CD4-positive, alpha-beta memory T cell (primary cell): ENCODE measurements at regions of chr7 and their contacts with region 1.

Region 1: GRCh38 chr7:74449809-74450397 is 3.8 kb upstream of the GTF2IRD1 start:
- DNase-seq: peak; percentile 59 to 67 (median 63)
- H3K4me3 ChIP-seq: no peak overlapping the region
- H3K4me3 Mint-ChIP-seq: peak overlapping the region in 1 of 8 donors; percentile 71
- H3K27ac ChIP-seq: no peak overlapping the region
- H3K27ac Mint-ChIP-seq: peak overlapping the region; percentile 26 to 89 (median 74)
- H3K4me1 ChIP-seq: peaks cover 22% of the 10 kb centered on the region
- H3K4me1 Mint-ChIP-seq: peaks cover 14 to 25% (median 19%) of the 10 kb centered on the region in 4 donors
- H3K27me3 ChIP-seq: no peaks in the 10 kb centered on the region
- H3K27me3 Mint-ChIP-seq: peaks cover 0 to 1% of the 10 kb centered on the region in 2 donors

Region 2: GRCh38 chr7:74464943-74465886 is 15.3 kb after region 1 on chr7:
- CTCF ChIA-PET with region 1: interaction called, 12 read pairs
- POLR2A ChIA-PET with region 1: interaction called, 3 read pairs
- intact Hi-C with region 1: no loop called
- DNase-seq: peak in 3 of 5 donors; percentile 9 to 21 (median 12)
- H3K4me3 ChIP-seq: no peak overlapping the region
- H3K4me3 Mint-ChIP-seq: peak overlapping the region in 3 of 8 donors; percentile 9 to 35 (median 17)
- H3K27ac ChIP-seq: no peak overlapping the region
- H3K27ac Mint-ChIP-seq: peak overlapping the region in 4 of 7 donors; percentile 12 to 43 (median 23)
- H3K4me1 ChIP-seq: peaks cover 9% of the 10 kb centered on the region
- H3K4me1 Mint-ChIP-seq: peaks cover 3 to 17% (median 6%) of the 10 kb centered on the region in 4 donors
- H3K27me3 ChIP-seq: no peaks in the 10 kb centered on the region
- H3K27me3 Mint-ChIP-seq: no peaks in the 10 kb centered on the region

Region 3: DNA sequence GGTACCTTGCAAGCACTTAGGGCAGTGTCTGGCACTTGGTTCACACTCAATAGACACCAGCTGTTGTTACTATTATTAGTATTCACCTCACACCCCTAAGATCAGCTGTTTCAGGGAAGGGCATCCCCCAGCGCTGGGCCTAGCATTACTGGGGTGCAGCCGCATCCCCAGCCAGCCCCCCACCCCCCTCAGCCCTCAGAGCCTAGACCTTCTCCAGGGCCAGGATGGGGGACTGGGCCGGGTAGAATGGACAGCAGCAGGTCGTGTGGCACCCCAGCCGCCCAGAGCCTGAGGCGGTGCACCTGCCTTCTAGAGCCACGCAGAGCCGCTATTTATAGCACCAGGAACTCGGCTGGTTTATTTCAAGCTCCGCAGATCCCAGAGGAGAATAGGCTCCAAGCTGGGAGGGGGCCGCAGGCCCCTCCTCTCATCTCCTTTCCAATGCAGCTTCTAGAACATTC is 64.3 kb after region 1 on chr7:
- CTCF ChIA-PET with region 1: no interaction called
- POLR2A ChIA-PET with region 1: no interaction called
- intact Hi-C with region 1: no loop called
- DNase-seq: no peak
- H3K4me3 ChIP-seq: no peak overlapping the region
- H3K4me3 Mint-ChIP-seq: no peak overlapping the region
- H3K27ac ChIP-seq: no peak overlapping the region
- H3K27ac Mint-ChIP-seq: no peak overlapping the region
- H3K4me1 ChIP-seq: no peaks in the 10 kb centered on the region
- H3K4me1 Mint-ChIP-seq: no peaks in the 10 kb centered on the region
- H3K27me3 ChIP-seq: no peaks in the 10 kb centered on the region
- H3K27me3 Mint-ChIP-seq: no peaks in the 10 kb centered on the region

Region 4: DNA sequence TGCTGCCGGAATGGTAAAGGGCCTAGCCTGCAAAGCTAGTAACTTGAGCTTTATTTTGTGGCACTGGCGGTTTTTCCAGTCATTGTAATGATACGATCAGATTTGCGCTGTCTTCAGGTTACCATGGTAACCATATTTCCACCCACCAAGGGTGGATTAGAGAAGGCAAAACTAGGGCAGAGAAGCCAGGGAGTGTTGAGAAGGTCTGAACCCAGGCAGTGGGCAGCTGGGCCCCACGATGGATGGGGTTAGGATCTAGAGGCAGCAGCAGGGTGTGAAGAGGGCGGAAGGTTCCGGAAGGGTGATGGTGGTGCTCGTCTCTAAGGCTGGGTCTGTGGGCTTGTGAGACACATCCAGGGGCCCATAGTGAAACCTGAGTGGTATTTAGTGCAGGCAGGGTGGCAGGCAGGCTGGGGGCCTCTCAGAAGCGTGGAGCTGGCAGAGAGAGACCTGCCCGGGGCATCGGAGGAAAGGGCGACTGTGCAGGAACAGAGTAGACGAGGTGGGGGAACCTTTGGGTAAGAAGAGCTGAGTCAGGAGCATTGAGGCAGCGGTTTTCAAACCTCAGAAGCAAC is 119.7 kb after region 1 on chr7:
- CTCF ChIA-PET with region 1: interaction called, 53 read pairs
- POLR2A ChIA-PET with region 1: interaction called, 4 read pairs
- intact Hi-C with region 1: loop called (anchors 1 kb)
- DNase-seq: peak; percentile 36 to 66 (median 51)
- H3K4me3 ChIP-seq: no peak overlapping the region
- H3K4me3 Mint-ChIP-seq: peak overlapping the region; percentile 25 to 85 (median 74)
- H3K27ac ChIP-seq: no peak overlapping the region
- H3K27ac Mint-ChIP-seq: peak overlapping the region; percentile 85 to 97 (median 95)
- H3K4me1 ChIP-seq: peaks cover 11% of the 10 kb centered on the region
- H3K4me1 Mint-ChIP-seq: peaks cover 6 to 19% (median 14%) of the 10 kb centered on the region in 4 donors
- H3K27me3 ChIP-seq: no peaks in the 10 kb centered on the region
- H3K27me3 Mint-ChIP-seq: no peaks in the 10 kb centered on the region

Region 5: GRCh38 chr7:74656837-74657691 is 207.2 kb after region 1 on chr7:
- CTCF ChIA-PET with region 1: interaction called, 3 read pairs
- POLR2A ChIA-PET with region 1: interaction called, 15 read pairs
- intact Hi-C with region 1: loop called (anchors 2 kb)
- DNase-seq: peak; percentile 95 to 96 (median 96)
- H3K4me3 ChIP-seq: peak overlapping the region; percentile 87 to 88
- H3K4me3 Mint-ChIP-seq: peak overlapping the region; percentile 84 to 95 (median 91)
- H3K27ac ChIP-seq: peak overlapping the region; percentile 74
- H3K27ac Mint-ChIP-seq: peak overlapping the region; percentile 82 to 96 (median 92)
- H3K4me1 ChIP-seq: peaks cover 46% of the 10 kb centered on the region
- H3K4me1 Mint-ChIP-seq: peaks cover 23 to 57% (median 42%) of the 10 kb centered on the region in 4 donors
- H3K27me3 ChIP-seq: no peaks in the 10 kb centered on the region
- H3K27me3 Mint-ChIP-seq: no peaks in the 10 kb centered on the region